Adrenal gland (tissue), 19 donors: ENCODE measurements at regions of chr5 and their contacts with region 1.

Region 1: DNA sequence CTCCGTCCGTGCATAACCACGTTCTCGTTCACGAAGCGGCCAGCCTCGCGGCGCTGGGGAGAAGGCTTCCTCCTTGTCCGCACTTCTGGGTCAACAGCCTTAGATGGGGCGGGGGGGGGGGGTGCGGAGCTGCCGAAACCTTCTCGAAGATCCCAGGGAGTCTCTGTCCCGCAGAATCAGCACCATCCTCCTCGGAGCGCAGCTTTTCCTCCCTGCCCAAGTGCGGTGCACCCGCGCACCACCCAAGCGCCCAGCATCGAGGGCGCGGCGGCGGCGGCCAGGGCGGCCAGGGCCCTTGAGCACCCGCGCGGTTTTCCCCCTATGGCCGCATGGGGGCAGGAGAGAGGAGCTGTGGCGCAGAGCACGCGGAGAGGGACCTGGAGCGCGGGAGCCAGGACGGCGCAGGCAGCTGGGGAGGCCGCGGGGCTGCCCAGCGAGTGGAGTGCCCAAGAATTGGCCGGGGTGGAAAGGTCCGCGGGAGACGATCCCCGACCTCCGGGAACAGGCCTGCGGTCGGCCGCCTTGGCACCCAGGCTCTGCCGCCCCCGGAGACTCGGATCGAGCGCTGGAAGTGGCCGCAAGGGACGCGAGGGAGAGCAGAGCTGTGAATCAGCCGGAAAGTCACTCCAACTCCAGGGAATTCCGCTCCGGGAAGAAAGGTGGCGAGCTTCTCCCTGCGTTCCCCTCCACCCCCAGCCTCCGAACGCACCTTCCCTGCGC is 43.1 kb downstream of the TMEM174 start:
- DNase-seq: peak; percentile 70 to 81 (median 77)
- H3K4me3 ChIP-seq: peak overlapping the region in 1 of 4 donors; percentile 51
- H3K27ac ChIP-seq: peak overlapping the region in 2 of 5 donors; percentile 47 to 64
- H3K4me1 ChIP-seq: peaks cover 5 to 14% of the 10 kb centered on the region in 2 donors
- H3K27me3 ChIP-seq: peaks cover 59% of the 10 kb centered on the region
- CTCF ChIP-seq: peak; percentile 57 to 91 (median 76)
- POLR2A ChIP-seq: no peak

Region 2: DNA sequence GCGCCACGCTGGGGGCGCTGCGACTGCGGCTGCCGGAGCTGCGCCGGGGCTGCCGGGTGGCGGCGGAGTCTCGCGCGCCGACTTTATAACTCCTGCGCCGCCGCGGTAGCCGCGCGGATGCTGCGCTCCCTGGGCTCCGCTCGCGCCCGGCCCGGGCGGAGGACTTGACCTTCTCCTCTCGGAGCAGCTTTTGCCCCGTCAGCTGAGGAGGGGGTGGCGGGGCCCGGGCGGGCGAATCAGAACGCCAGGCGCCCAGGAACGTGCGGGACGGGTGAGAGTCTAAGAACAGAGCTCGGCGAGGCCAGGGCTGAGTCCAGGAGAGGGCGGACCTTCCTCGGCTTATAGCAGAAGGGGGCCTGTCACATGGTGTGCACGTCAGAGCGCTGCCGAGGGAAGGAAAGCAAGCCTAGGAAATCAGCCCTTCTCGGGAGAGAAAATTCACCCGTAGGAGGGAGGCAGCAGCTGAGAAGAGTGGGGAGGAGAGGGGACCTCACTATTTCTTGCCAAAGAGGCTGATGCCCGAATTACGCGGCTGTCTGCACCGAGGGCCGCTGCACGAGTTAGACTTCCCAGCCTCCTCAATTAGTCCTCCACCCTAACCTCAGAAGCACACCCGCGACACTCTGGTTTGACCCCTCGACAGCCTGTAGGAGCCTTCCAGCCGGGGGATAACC is 232.5 kb after region 1 on chr5 and contains the start of gene FOXD1:
- intact Hi-C with region 1: loop called (anchors 5 to 10 kb)
- DNase-seq: peak; percentile 45 to 78 (median 67)
- H3K4me3 ChIP-seq: peak within 1 kb of the TSS in 1 of 4 donors; percentile 55
- H3K27ac ChIP-seq: peak within 1 kb of the TSS in 2 of 5 donors; percentile 69 to 88
- H3K4me1 ChIP-seq: peaks cover 0 to 18% of the 10 kb centered on the region in 2 donors
- H3K27me3 ChIP-seq: peaks cover 85% of the 10 kb centered on the region
- CTCF ChIP-seq: no peak
- POLR2A ChIP-seq: peak; percentile 18 to 29
- total RNA-seq, gene FOXD1: 1.1 to 6.5 (median 2.2) TPM

Region 3: GRCh38 chr5:73454351-73455036 is 238.4 kb after region 1 on chr5:
- intact Hi-C with region 1: loop called (anchors 5 to 10 kb)
- DNase-seq: peak in 4 of 7 donors; percentile 35 to 55 (median 50)
- H3K4me3 ChIP-seq: no peak overlapping the region
- H3K27ac ChIP-seq: no peak overlapping the region
- H3K4me1 ChIP-seq: peaks cover 0 to 10% of the 10 kb centered on the region in 2 donors
- H3K27me3 ChIP-seq: peaks cover 58% of the 10 kb centered on the region
- CTCF ChIP-seq: peak; percentile 36 to 69 (median 50)
- POLR2A ChIP-seq: no peak